Natural killer cell (primary cell): ENCODE measurements at regions of chr15 and their contacts with region 1.

Region 1: GRCh38 chr15:45402162-45402954 is 24.0 kb upstream of the GATM start:
- DNase-seq: peak; percentile 95 to 99
- ATAC-seq: peak; percentile 87 to 96 (median 90)
- H3K4me3 ChIP-seq: peak overlapping the region; percentile 70
- H3K4me3 Mint-ChIP-seq: peak overlapping the region; percentile 91
- H3K27ac ChIP-seq: peak overlapping the region; percentile 91
- H3K27ac Mint-ChIP-seq: peak overlapping the region; percentile 92 to 93
- H3K4me1 ChIP-seq: peaks cover 15% of the 10 kb centered on the region
- H3K4me1 Mint-ChIP-seq: peaks cover 21 to 25% of the 10 kb centered on the region in 2 donors
- H3K27me3 ChIP-seq: no peaks in the 10 kb centered on the region
- H3K27me3 Mint-ChIP-seq: no peaks in the 10 kb centered on the region
- CTCF ChIP-seq: no peak

Region 2: GRCh38 chr15:45126535-45127158 is 275.7 kb before region 1 on chr15:
- intact Hi-C with region 1: loop called (anchors 1 kb)
- DNase-seq: peak in 1 of 2 donors; percentile 72
- ATAC-seq: peak in 2 of 3 donors; percentile 58 to 70
- H3K4me3 ChIP-seq: no peak overlapping the region
- H3K4me3 Mint-ChIP-seq: no peak overlapping the region
- H3K27ac ChIP-seq: no peak overlapping the region
- H3K27ac Mint-ChIP-seq: no peak overlapping the region
- H3K4me1 ChIP-seq: peaks cover 12% of the 10 kb centered on the region
- H3K4me1 Mint-ChIP-seq: no peaks in the 10 kb centered on the region
- H3K27me3 ChIP-seq: peaks cover 30% of the 10 kb centered on the region
- H3K27me3 Mint-ChIP-seq: peaks cover 43 to 62% of the 10 kb centered on the region in 2 donors
- CTCF ChIP-seq: peak; percentile 65

Region 3: DNA sequence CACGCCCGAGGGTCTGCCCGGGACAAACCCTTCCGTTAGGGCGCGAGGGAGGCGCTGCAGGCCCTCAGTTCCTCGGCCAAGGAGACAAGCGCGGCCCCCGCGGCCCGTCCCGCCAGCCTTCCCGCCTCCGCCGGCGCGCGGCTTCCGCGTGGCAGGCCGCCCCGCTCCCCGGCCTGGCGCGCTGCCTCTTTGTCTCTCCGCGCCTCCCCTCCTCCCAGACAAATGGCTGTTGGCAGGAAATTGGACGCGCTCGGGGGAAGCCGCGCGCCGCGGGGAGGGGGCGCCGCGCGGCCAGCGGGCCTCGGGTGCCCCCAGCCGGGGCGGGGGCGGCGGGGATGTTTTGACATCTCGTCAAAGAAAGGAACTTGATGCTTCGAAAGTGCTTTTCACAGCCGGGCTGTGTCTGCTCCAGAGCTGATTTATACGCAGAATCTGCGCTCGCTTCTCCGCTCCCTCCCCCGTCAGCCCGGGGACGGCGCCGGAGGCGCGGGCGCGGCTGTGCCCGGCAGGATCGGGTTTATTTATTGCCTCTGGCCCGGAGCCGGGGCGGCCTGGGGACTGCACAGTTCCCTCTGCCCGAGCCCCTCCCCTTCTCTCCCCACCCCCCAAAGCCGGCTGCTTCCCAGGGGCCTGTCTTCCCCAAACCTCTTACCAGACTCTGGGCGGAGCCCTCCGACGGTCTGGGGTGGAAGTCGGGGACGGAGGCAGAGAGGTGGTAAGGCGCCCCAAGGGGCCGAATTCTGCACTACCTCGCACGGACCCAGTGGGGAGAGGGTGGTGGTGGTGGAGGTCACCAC is 235.3 kb before region 1 on chr15:
- intact Hi-C with region 1: loop called (anchors 1 kb)
- DNase-seq: peak; percentile 71 to 89
- ATAC-seq: peak; percentile 92 to 95 (median 94)
- H3K4me3 ChIP-seq: peak overlapping the region; percentile 70
- H3K4me3 Mint-ChIP-seq: peak overlapping the region; percentile 77
- H3K27ac ChIP-seq: peak overlapping the region; percentile 81
- H3K27ac Mint-ChIP-seq: peak overlapping the region; percentile 46 to 81
- H3K4me1 ChIP-seq: peaks cover 34% of the 10 kb centered on the region
- H3K4me1 Mint-ChIP-seq: peaks cover 6 to 35% of the 10 kb centered on the region in 2 donors
- H3K27me3 ChIP-seq: no peaks in the 10 kb centered on the region
- H3K27me3 Mint-ChIP-seq: no peaks in the 10 kb centered on the region
- CTCF ChIP-seq: peak; percentile 66

Region 4: DNA sequence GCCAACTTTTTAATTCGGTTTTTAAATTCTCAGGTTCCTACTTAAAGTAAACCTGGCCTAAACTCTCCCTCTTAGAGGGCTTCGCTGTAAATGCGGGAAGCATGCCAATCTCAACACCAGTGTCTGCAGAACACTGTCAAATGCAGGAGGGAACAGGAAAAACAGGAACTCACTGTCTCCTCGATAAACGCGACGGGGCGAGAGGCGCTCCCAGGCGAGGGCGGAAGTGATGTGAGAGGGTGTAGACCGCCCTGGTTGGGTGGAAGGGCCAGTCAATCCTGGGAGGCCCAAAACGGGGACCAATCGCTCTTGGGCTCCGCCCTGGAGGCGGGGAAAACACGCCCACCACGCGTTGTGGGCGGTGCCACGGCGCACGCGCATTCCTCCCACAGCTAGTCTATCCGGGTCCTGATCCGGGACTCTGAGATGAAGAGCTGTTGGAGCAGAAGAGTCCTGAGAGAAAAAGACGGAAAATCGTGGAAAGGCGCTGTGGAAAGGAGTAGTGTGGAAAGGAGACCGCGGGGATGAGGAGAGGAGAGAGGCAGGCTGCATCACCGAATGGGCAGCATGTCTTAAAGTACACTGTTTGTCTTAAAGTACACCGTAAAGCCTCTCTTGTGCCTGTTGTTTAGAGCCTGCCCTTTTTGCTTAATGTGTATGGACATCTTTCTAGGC is 123.2 kb before region 1 on chr15:
- intact Hi-C with region 1: loop called (anchors 1 kb)
- DNase-seq: peak; percentile 98 to 99
- ATAC-seq: peak; percentile 99 to 100 (median 99)
- H3K4me3 ChIP-seq: peak overlapping the region; percentile 60
- H3K4me3 Mint-ChIP-seq: peak overlapping the region; percentile 98
- H3K27ac ChIP-seq: peak overlapping the region; percentile 80
- H3K27ac Mint-ChIP-seq: peak overlapping the region; percentile 83 to 97
- H3K4me1 ChIP-seq: peaks cover 13% of the 10 kb centered on the region
- H3K4me1 Mint-ChIP-seq: peaks cover 14 to 23% of the 10 kb centered on the region in 2 donors
- H3K27me3 ChIP-seq: no peaks in the 10 kb centered on the region
- H3K27me3 Mint-ChIP-seq: peaks cover 3 to 8% of the 10 kb centered on the region in 2 donors
- CTCF ChIP-seq: no peak

Region 5: DNA sequence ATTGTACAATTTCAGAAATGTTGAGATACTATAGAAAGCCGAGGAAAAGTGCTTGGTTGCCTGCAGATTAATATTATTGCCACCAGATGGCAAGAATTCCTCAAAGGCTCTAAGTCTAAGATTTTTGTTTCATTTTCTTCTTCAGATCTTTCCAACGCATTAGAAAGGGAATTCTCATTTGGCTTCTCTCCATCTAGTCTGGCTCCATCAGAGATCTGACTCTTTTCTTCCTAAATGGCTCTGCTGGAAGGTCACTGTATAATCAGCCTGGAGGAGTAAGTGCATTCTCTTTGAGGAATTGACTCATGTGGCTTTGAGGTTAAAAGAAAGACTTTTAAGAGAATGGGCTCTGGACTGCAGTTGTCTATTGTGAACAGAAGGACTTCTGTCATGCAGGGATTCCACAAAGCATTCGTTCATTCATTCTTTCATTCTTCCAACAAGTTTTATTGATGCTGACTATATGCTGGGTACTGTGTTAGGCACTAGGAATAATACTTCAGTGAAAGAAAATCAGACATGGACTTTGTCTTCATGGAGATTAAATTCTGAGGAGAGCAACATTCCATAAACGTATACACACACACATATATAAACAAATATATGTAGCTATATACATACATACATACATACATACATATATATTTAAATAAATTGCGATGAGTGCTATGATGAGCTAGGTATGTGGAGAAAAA is 95.0 kb before region 1 on chr15:
- intact Hi-C with region 1: loop called (anchors 1 kb)
- DNase-seq: peak in 1 of 2 donors; percentile 36
- ATAC-seq: peak in 2 of 3 donors; percentile 64 to 66
- H3K4me3 ChIP-seq: no peak overlapping the region
- H3K4me3 Mint-ChIP-seq: peak overlapping the region; percentile 79
- H3K27ac ChIP-seq: no peak overlapping the region
- H3K27ac Mint-ChIP-seq: peak overlapping the region in 1 of 2 donors; percentile 44
- H3K4me1 ChIP-seq: no peaks in the 10 kb centered on the region
- H3K4me1 Mint-ChIP-seq: peaks cover 9 to 11% of the 10 kb centered on the region in 2 donors
- H3K27me3 ChIP-seq: peaks cover 14% of the 10 kb centered on the region
- H3K27me3 Mint-ChIP-seq: peaks cover 25 to 30% of the 10 kb centered on the region in 2 donors
- CTCF ChIP-seq: peak; percentile 49

Region 6: DNA sequence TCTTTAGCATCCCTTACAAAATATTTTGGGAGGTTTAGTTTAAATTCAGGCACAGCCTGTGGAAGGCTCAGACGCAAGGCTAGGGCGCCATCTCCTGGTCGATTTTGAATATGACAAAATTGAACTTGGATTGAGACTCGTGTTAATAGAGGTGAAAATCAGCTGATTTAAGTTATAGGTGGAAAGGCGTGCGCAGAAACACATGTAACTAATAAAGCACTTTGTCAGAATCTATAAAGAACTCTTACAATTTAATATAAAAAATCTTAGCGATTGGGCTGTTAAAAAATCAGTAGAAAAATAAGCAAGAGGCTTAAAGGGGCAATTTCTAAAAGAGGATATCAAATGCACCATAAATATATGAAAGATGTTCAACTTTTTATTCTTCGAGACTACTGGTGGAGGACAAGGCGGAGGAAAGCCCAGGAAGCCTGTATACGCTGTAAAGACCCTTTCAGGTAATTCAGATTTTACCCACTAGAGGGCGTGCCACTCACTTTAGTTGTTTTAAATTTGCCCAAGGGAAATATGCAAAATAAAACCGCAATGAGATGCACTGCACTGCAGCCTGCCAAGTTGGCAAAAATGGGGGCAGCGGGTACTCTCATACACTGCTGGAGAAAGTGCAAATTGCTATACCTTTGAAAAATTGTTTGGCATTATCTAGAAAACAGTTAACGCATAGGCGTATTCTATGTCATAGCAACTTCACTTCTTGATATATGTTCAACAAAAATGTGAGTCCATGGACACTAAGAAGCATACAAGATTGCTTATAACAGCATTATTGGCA is 55.5 kb after region 1 on chr15:
- intact Hi-C with region 1: loop called (anchors 2 kb)
- DNase-seq: peak; percentile 55 to 92
- ATAC-seq: peak; percentile 70 to 81 (median 76)
- H3K4me3 ChIP-seq: peak overlapping the region; percentile 36
- H3K4me3 Mint-ChIP-seq: peak overlapping the region; percentile 91
- H3K27ac ChIP-seq: peak overlapping the region; percentile 58
- H3K27ac Mint-ChIP-seq: peak overlapping the region; percentile 84 to 95
- H3K4me1 ChIP-seq: peaks cover 32% of the 10 kb centered on the region
- H3K4me1 Mint-ChIP-seq: peaks cover 21 to 26% of the 10 kb centered on the region in 2 donors
- H3K27me3 ChIP-seq: no peaks in the 10 kb centered on the region
- H3K27me3 Mint-ChIP-seq: no peaks in the 10 kb centered on the region
- CTCF ChIP-seq: peak; percentile 94

Region 7: GRCh38 chr15:45587095-45587860 is 184.9 kb after region 1 on chr15 and contains the start of gene BLOC1S6:
- intact Hi-C with region 1: loop called (anchors 1 kb)
- DNase-seq: peak; percentile 93 to 95
- ATAC-seq: peak; percentile 88 to 97 (median 93)
- H3K4me3 ChIP-seq: peak within 1 kb of the TSS; percentile 68
- H3K4me3 Mint-ChIP-seq: peak within 1 kb of the TSS; percentile 97
- H3K27ac ChIP-seq: peak within 1 kb of the TSS; percentile 94
- H3K27ac Mint-ChIP-seq: peak within 1 kb of the TSS; percentile 99 to 100
- H3K4me1 ChIP-seq: peaks cover 15% of the 10 kb centered on the region
- H3K4me1 Mint-ChIP-seq: peaks cover 39% of the 10 kb centered on the region in 2 donors
- H3K27me3 ChIP-seq: no peaks in the 10 kb centered on the region
- H3K27me3 Mint-ChIP-seq: peaks cover 0 to 4% of the 10 kb centered on the region in 2 donors
- CTCF ChIP-seq: no peak
- total RNA-seq, gene BLOC1S6: 63.4 to 81.3 (median 65.6) TPM